ENCODE measurements at regions of chr18 and their contacts with region 1.

Region 1: GRCh38 chr18:839224-840022 is 27.4 kb upstream of the YES1 start:
- DNase-seq: peak; percentile 70
- ATAC-seq: peak; percentile 99
- H3K4me3 ChIP-seq: no peak overlapping the region
- H3K27ac ChIP-seq: no peak overlapping the region
- H3K4me1 ChIP-seq: no peaks in the 10 kb centered on the region
- H3K27me3 ChIP-seq: peaks cover 4% of the 10 kb centered on the region
- CTCF ChIP-seq: peak; percentile 90
- POLR2A ChIP-seq: no peak
- RAD21 ChIP-seq: peak; percentile 76

Region 2: GRCh38 chr18:275486-275885 is 563.9 kb before region 1 on chr18:
- CTCF ChIA-PET with region 1: no interaction called
- POLR2A ChIA-PET with region 1: no interaction called
- dilution Hi-C with region 1: no loop called
- in situ Hi-C with region 1: loop called (anchors 10 kb)
- intact Hi-C with region 1: no loop called
- DNase-seq: no peak
- ATAC-seq: no peak
- H3K4me3 ChIP-seq: no peak overlapping the region
- H3K27ac ChIP-seq: no peak overlapping the region
- H3K4me1 ChIP-seq: no peaks in the 10 kb centered on the region
- H3K27me3 ChIP-seq: no peaks in the 10 kb centered on the region
- CTCF ChIP-seq: no peak
- POLR2A ChIP-seq: no peak
- RAD21 ChIP-seq: no peak

Region 3: DNA sequence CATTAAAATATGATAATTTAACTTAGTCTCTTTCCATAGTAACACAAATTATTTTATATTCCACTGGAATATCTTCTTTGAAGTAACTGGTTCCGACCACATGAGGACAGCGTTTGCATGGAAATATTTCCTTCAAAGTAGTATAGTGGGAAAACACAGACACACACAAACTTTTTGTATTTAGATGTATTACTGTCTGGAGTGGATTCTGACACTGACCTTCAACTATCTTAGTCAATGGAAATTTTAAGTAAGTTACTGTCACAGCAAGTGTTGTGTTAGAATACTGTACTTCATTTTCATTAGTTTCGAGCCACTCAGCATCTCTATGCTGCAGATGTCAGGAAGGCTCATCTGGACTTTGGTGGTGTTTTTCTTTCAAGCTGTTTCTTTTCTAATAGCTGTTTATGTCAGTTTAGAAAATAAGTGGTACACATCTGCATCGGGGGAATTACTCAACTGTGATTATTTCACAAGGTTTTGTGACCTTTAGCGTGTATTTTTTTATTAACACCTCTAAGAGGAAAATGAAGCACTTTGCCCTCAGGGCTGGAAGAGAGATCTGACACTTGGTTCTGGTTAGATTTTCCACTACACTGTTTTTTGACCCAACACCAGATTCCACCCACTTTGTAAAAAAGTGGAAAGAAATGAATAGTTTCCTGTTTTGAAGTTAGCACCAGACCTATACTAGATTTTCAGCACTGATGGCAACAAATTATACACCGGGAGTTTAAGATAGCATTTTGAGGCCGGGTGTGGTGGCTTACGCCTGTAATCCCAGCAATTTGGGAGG is 552.7 kb before region 1 on chr18:
- CTCF ChIA-PET with region 1: no interaction called
- POLR2A ChIA-PET with region 1: no interaction called
- dilution Hi-C with region 1: no loop called
- in situ Hi-C with region 1: no loop called
- intact Hi-C with region 1: loop called (anchors 2 kb)
- DNase-seq: peak; percentile 42
- ATAC-seq: peak; percentile 70
- H3K4me3 ChIP-seq: no peak overlapping the region
- H3K27ac ChIP-seq: no peak overlapping the region
- H3K4me1 ChIP-seq: no peaks in the 10 kb centered on the region
- H3K27me3 ChIP-seq: peaks cover 8% of the 10 kb centered on the region
- CTCF ChIP-seq: peak; percentile 85
- POLR2A ChIP-seq: peak; percentile 33; the same call in 1 of the 2 replicates
- RAD21 ChIP-seq: peak; percentile 91

Region 4: GRCh38 chr18:499551-500408 is 339.6 kb before region 1 on chr18:
- CTCF ChIA-PET with region 1: no interaction called
- POLR2A ChIA-PET with region 1: no interaction called
- dilution Hi-C with region 1: no loop called
- in situ Hi-C with region 1: no loop called
- intact Hi-C with region 1: loop called (anchors 10 kb)
- DNase-seq: peak; percentile 85
- ATAC-seq: peak; percentile 60
- H3K4me3 ChIP-seq: peak overlapping the region; percentile 35
- H3K27ac ChIP-seq: no peak overlapping the region
- H3K4me1 ChIP-seq: peaks cover 5% of the 10 kb centered on the region; the same call in 1 of the 2 replicates
- H3K27me3 ChIP-seq: peaks cover 37% of the 10 kb centered on the region
- CTCF ChIP-seq: no peak
- POLR2A ChIP-seq: no peak
- RAD21 ChIP-seq: no peak

Region 5: DNA sequence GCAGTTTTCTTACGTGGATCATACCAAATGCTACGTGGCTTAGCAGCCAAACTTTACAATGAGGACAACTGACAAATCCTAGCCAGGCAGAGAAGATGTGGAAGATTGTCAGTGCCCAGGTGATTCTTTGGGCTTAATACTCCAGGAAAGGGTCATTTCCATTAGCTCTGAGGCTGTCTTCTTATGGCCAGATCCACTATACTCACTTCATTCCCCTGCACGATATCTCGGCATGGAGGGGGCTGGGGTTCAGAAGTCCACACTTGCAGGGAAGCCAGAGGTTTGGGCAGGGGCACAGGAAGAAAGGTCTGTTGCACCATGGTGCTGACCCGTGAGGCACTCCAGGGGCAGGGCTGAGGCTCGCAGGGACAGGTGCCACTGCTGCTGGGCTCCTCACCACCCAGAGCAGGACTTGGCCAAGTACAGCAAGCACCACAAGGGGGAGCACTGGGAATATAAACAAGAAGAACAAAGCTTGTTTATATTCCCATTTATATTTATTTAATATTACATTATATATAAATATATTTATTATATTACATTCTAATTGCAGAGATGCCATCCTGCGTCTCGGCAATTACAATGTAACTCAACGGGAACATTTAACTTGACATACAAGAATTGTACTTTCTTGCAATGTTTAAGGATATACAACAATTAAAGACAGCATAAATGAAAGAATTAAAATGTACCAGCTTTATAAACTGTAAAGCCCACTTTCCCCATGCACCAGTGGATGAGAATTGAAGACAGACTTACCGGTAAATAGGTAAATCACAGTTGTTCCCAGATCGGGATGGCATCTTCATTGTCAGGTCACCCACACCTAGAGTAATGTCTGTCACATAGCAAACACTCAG is 215.4 kb before region 1 on chr18:
- CTCF ChIA-PET with region 1: interaction called, 12 read pairs
- POLR2A ChIA-PET with region 1: no interaction called
- dilution Hi-C with region 1: no loop called
- in situ Hi-C with region 1: loop called (anchors 5 kb)
- intact Hi-C with region 1: loop called (anchors 1 kb)
- DNase-seq: peak; percentile 78
- ATAC-seq: peak; percentile 85
- H3K4me3 ChIP-seq: no peak overlapping the region
- H3K27ac ChIP-seq: no peak overlapping the region
- H3K4me1 ChIP-seq: no peaks in the 10 kb centered on the region; the same call in 1 of the 2 replicates
- H3K27me3 ChIP-seq: peaks cover 8% of the 10 kb centered on the region
- CTCF ChIP-seq: peak; percentile 73
- POLR2A ChIP-seq: no peak
- RAD21 ChIP-seq: peak; percentile 67

Region 6: GRCh38 chr18:658001-658946 is 181.1 kb before region 1 on chr18:
- CTCF ChIA-PET with region 1: no interaction called
- POLR2A ChIA-PET with region 1: no interaction called
- dilution Hi-C with region 1: no loop called
- in situ Hi-C with region 1: no loop called
- intact Hi-C with region 1: loop called (anchors 10 kb)
- DNase-seq: peak; percentile 84
- ATAC-seq: peak; percentile 94
- H3K4me3 ChIP-seq: peak overlapping the region; percentile 90
- H3K27ac ChIP-seq: peak overlapping the region; percentile 98
- H3K4me1 ChIP-seq: 0 out of 2 replicates have a peak, but pooled peaks cover 2% of the 10 kb centered on the region
- H3K27me3 ChIP-seq: no peaks in the 10 kb centered on the region
- CTCF ChIP-seq: no peak
- POLR2A ChIP-seq: no peak
- RAD21 ChIP-seq: no peak

Region 7: DNA sequence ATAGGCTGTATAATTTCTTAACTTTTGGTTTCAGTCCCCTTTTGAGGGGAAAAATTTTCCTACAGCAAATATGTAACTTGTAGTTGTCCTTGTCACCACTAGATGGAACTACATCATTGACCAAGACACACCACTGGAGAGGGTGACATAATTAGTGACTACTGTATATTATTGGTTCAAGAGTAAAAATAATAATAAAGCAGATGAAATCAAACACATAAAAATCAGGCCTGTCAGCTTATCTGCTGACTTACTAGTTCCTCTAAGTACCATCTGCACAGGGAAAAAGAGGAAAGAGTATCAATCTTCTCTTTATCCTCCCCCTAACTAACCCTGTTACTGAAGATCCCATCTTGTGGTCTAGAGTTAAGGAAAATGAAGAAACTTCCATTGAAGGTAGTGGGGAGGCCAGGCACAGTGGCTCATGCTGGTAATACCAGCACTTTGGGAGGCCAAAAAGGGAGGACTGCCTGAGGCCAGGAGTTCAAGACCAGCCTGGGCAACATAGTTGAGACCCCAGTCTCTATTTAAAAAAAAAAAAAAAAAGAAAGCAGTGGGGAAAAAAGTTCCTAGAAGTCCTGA is 97.4 kb before region 1 on chr18:
- CTCF ChIA-PET with region 1: interaction called, 3 read pairs
- POLR2A ChIA-PET with region 1: no interaction called
- dilution Hi-C with region 1: no loop called
- in situ Hi-C with region 1: no loop called
- intact Hi-C with region 1: loop called (anchors 2 kb)
- DNase-seq: peak; percentile 63
- ATAC-seq: peak; percentile 83
- H3K4me3 ChIP-seq: no peak overlapping the region
- H3K27ac ChIP-seq: no peak overlapping the region
- H3K4me1 ChIP-seq: no peaks in the 10 kb centered on the region
- H3K27me3 ChIP-seq: no peaks in the 10 kb centered on the region
- CTCF ChIP-seq: peak; percentile 77
- POLR2A ChIP-seq: no peak
- RAD21 ChIP-seq: peak; percentile 83